ENCODE measurements at regions of chr1 and their contacts with region 1.

Region 1: GRCh38 chr1:7752512-7753417 is 18.3 kb upstream of the VAMP3 start:
- DNase-seq: peak in 8 of 9 donors; percentile 24 to 51 (median 42)
- ATAC-seq: peak; percentile 65
- H3K4me3 ChIP-seq: no peak overlapping the region
- H3K4me3 Mint-ChIP-seq: peak overlapping the region in 9 of 10 donors; percentile 12 to 68 (median 55)
- H3K27ac ChIP-seq: no peak overlapping the region
- H3K27ac Mint-ChIP-seq: no peak overlapping the region
- H3K4me1 ChIP-seq: peaks cover 0 to 7% of the 10 kb centered on the region in 2 donors
- H3K4me1 Mint-ChIP-seq: peaks cover 11 to 21% (median 19%) of the 10 kb centered on the region in 7 donors
- H3K27me3 ChIP-seq: no peaks in the 10 kb centered on the region
- H3K27me3 Mint-ChIP-seq: peaks cover 5 to 23% (median 15%) of the 10 kb centered on the region in 5 donors

Region 2: GRCh38 chr1:7667625-7668218 is 85.0 kb before region 1 on chr1:
- CTCF ChIA-PET with region 1: interaction called, 204 read pairs
- POLR2A ChIA-PET with region 1: interaction called, 9 read pairs
- intact Hi-C with region 1: loop called (anchors 1 kb)
- DNase-seq: peak; percentile 51 to 85 (median 75)
- ATAC-seq: peak; percentile 86
- H3K4me3 ChIP-seq: no peak overlapping the region
- H3K4me3 Mint-ChIP-seq: no peak overlapping the region
- H3K27ac ChIP-seq: no peak overlapping the region
- H3K27ac Mint-ChIP-seq: no peak overlapping the region
- H3K4me1 ChIP-seq: no peaks in the 10 kb centered on the region
- H3K4me1 Mint-ChIP-seq: peaks cover 0 to 8% (median 3%) of the 10 kb centered on the region in 7 donors
- H3K27me3 ChIP-seq: no peaks in the 10 kb centered on the region
- H3K27me3 Mint-ChIP-seq: peaks cover 0 to 4% (median 0%) of the 10 kb centered on the region in 5 donors

Measured in naive thymus-derived CD4-positive, alpha-beta T cell (primary cell).